ENCODE measurements at regions of chr6 and their contacts with region 1.

Region 1: GRCh38 chr6:26157977-26158648 is 70.9 kb downstream of the HFE start:
- DNase-seq: peak; percentile 92
- H3K4me3 Mint-ChIP-seq: peak overlapping the region; percentile 79
- H3K27ac Mint-ChIP-seq: peak overlapping the region; percentile 97
- H3K4me1 Mint-ChIP-seq: peaks cover 50% of the 10 kb centered on the region
- H3K27me3 Mint-ChIP-seq: peaks cover 13% of the 10 kb centered on the region

Region 2: DNA sequence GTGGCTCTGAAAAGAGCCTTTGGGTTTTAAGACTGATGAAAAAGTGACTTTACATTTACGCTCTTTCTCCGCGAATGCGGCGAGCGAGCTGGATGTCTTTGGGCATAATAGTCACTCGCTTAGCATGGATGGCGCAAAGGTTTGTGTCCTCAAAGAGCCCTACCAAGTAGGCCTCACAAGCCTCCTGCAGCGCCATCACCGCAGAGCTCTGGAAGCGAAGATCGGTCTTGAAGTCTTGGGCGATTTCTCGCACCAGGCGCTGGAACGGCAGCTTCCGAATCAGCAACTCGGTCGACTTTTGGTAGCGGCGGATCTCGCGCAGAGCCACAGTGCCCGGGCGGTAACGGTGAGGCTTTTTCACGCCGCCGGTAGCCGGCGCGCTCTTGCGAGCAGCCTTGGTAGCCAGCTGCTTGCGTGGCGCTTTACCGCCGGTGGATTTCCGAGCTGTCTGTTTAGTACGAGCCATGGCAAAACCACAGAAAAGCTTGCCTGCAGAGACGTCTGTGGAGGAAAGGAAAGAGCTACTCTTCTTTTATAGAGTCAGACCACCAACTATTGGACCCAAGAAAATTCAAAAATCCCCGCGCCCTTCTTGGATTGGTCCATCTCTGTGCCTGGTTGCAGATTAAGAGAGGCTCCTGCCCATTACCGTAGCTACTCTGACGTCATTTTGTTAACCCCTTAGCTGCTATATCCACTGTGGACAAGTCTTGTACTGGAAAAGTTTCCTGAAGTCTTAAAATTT is 126.3 kb before region 1 on chr6:
- CTCF ChIA-PET with region 1: no interaction called
- intact Hi-C with region 1: loop called (anchors 1 kb)
- DNase-seq: peak; percentile 96
- H3K4me3 Mint-ChIP-seq: peak overlapping the region; percentile 86
- H3K27ac Mint-ChIP-seq: peak overlapping the region; percentile 97
- H3K4me1 Mint-ChIP-seq: peaks cover 33% of the 10 kb centered on the region
- H3K27me3 Mint-ChIP-seq: no peaks in the 10 kb centered on the region

Region 3: GRCh38 chr6:26054857-26055669 is 103.0 kb before region 1 on chr6:
- CTCF ChIA-PET with region 1: no interaction called
- intact Hi-C with region 1: loop called (anchors 1 kb)
- DNase-seq: peak; percentile 95
- H3K4me3 Mint-ChIP-seq: peak overlapping the region; percentile 97
- H3K27ac Mint-ChIP-seq: peak overlapping the region; percentile 100
- H3K4me1 Mint-ChIP-seq: peaks cover 18% of the 10 kb centered on the region
- H3K27me3 Mint-ChIP-seq: peaks cover 11% of the 10 kb centered on the region

Region 4: GRCh38 chr6:26183581-26184366 is 25.7 kb after region 1 on chr6:
- CTCF ChIA-PET with region 1: interaction called, 3 read pairs
- intact Hi-C with region 1: loop called (anchors 2 kb)
- DNase-seq: peak; percentile 73
- H3K4me3 Mint-ChIP-seq: peak overlapping the region; percentile 86
- H3K27ac Mint-ChIP-seq: peak overlapping the region; percentile 89
- H3K4me1 Mint-ChIP-seq: peaks cover 30% of the 10 kb centered on the region
- H3K27me3 Mint-ChIP-seq: no peaks in the 10 kb centered on the region

Region 5: DNA sequence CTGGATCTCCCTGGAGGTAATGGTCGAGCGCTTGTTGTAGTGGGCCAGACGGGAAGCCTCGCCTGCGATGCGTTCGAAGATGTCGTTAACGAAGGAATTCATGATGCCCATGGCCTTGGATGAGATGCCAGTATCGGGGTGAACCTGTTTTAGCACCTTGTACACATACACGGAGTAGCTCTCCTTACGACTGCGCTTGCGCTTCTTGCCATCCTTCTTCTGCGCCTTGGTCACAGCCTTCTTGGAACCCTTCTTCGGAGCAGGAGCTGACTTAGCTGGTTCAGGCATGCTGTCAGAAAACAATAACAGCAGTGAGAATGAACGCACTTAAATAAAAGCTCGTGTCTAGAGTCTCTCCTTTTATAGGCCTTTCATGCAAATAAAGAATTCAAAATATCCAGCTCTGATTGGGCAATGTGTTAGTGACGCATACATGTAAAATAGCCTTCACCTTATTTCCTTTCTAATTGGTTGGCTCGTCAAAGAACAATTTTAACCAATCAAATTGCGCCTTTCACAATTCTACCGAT is 58.3 kb after region 1 on chr6:
- CTCF ChIA-PET with region 1: interaction called, 4 read pairs
- intact Hi-C with region 1: loop called (anchors 1 kb)
- DNase-seq: peak; percentile 85
- H3K4me3 Mint-ChIP-seq: no peak overlapping the region
- H3K27ac Mint-ChIP-seq: no peak overlapping the region
- H3K4me1 Mint-ChIP-seq: peaks cover 2% of the 10 kb centered on the region
- H3K27me3 Mint-ChIP-seq: no peaks in the 10 kb centered on the region

Region 6: DNA sequence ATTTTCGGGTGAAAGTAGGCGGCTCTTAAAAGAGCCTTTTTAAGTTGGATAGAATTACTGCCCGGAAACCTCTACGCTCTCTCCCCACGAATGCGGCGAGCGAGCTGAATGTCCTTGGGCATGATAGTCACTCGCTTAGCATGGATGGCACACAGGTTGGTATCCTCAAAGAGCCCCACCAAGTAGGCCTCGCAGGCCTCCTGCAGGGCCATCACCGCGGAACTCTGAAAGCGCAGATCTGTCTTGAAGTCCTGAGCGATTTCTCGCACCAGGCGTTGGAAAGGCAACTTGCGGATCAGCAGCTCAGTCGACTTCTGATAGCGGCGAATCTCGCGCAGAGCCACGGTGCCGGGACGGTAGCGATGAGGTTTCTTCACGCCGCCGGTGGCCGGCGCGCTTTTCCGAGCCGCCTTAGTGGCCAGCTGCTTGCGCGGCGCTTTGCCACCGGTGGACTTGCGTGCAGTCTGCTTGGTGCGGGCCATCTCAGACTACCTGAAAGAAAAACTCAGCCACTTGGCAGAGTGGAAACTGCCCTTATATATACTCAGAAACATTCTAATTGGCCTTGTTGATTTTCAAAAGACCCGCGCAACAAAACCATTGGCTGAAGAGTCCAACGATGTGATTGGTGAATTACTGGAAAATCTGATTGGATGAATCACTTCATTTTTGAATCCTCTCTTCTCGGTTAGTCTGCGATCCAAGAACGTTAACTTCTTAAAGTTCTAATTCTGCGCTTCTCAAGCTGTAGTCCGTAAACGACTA is 113.0 kb after region 1 on chr6:
- CTCF ChIA-PET with region 1: no interaction called
- intact Hi-C with region 1: loop called (anchors 1 kb)
- DNase-seq: peak; percentile 92
- H3K4me3 Mint-ChIP-seq: no peak overlapping the region
- H3K27ac Mint-ChIP-seq: no peak overlapping the region
- H3K4me1 Mint-ChIP-seq: peaks cover 9% of the 10 kb centered on the region
- H3K27me3 Mint-ChIP-seq: peaks cover 5% of the 10 kb centered on the region

Measured in activated naive CD4-positive, alpha-beta T cell treated with anti-CD3 and anti-CD28 coated beads for 36 hours (primary cell).